ENCODE measurements at regions of chr19 and their contacts with region 1.

Region 1: DNA sequence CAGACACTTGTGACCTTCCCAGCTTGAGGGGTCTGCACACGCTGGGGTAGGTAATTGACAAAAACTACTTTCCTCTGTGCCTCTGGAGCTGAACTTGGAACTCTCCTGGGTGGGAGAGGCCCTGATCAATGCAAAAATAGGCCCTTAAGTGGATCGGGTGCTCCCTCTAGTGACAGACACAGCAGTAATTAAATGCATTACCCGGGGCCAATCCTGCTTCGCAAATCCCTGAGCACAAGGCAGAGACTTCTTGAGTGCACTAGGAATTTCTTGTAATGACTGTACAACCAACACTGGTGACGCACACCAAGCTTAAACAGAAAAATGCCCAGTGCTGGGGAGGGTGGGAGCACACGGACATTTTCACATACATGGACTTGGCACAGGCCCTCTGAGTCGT is 10.6 kb upstream of the UBE2S start:
- DNase-seq: peak in 1 of 2 donors; percentile 82
- ATAC-seq: peak; percentile 53 to 75 (median 59)
- H3K4me3 ChIP-seq: no peak overlapping the region
- H3K4me3 Mint-ChIP-seq: no peak overlapping the region
- H3K27ac ChIP-seq: no peak overlapping the region
- H3K27ac Mint-ChIP-seq: no peak overlapping the region
- H3K4me1 ChIP-seq: peaks cover 9% of the 10 kb centered on the region
- H3K4me1 Mint-ChIP-seq: peaks cover 5 to 6% of the 10 kb centered on the region in 2 donors
- H3K27me3 ChIP-seq: peaks cover 3% of the 10 kb centered on the region
- H3K27me3 Mint-ChIP-seq: peaks cover 1 to 6% of the 10 kb centered on the region in 2 donors
- CTCF ChIP-seq: peak; percentile 46

Region 2: DNA sequence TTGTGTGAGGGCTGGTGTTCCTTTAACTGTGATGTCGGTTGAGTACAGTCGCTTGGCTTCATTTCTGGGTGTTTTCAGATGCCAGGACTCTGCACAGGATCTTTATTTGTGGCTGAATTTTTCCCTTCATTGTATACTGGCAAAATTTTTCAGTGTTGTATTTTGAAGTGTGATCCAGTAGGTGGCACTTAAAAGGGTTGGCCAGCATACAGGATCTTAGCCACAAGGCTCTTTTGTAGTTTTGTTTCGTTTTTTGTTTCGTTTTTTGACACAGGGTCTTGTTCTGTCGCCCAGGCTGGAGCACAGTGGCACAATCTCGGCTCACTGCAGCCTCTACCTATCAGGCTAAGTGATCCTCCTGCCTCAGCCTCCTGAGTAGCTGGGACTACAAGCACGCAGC is 535.4 kb before region 1 on chr19:
- intact Hi-C with region 1: loop called (anchors 5 kb)
- DNase-seq: peak; percentile 21 to 50
- ATAC-seq: peak; percentile 86 to 89 (median 86)
- H3K4me3 ChIP-seq: no peak overlapping the region
- H3K4me3 Mint-ChIP-seq: peak overlapping the region; percentile 75
- H3K27ac ChIP-seq: peak overlapping the region; percentile 80
- H3K27ac Mint-ChIP-seq: peak overlapping the region; percentile 71 to 86
- H3K4me1 ChIP-seq: peaks cover 32% of the 10 kb centered on the region
- H3K4me1 Mint-ChIP-seq: peaks cover 17 to 18% of the 10 kb centered on the region in 2 donors
- H3K27me3 ChIP-seq: peaks cover 5% of the 10 kb centered on the region
- H3K27me3 Mint-ChIP-seq: peaks cover 4 to 9% of the 10 kb centered on the region in 2 donors
- CTCF ChIP-seq: peak; percentile 50

Region 3: DNA sequence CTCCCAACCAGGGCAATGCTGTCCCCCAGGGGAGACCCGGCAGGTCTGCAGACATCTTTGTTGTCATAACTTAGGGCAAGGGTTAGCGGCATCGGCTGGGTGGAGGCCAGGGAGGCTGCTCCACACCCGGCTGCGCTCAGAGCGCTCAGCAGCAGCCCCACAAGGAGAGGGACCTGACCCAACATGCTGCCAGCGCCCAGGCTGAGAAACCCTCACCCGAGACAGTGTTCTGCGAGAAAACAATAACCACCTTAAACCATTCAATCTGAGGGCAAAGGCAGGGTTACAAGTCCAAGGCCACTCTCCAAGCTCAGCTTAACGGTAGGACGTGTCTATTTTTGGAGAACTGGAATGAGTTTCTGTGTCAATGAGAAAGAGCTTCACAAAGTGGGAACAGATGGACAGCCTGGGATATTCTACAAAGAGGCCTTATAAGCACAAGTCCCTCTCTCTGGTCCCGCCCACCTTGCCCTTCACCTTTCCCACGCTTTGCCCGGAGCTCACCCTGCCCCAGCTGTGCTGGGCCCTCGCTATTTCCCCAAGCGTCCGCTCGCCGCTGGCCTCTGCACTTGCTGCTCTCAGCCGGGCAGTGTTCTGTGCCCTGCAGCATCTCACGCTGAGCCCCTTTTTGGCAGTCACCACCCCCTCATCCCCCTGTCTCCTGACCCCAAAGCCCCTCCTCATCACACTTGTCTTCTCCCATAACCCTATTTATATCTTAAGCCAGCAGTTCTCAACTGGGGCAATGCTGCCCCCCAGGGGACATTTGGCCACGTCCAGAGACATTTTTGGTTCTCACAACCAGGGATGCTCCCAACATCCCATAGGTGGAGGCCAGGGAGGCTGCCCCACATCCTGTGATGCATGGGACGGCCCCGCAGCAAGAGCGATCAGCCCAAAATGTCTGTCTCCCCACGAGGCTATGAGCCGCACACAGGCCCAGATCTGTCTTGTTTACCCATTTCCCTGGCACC is 318.4 kb before region 1 on chr19:
- intact Hi-C with region 1: no loop called
- DNase-seq: no peak
- ATAC-seq: no peak
- H3K4me3 ChIP-seq: no peak overlapping the region
- H3K4me3 Mint-ChIP-seq: no peak overlapping the region
- H3K27ac ChIP-seq: no peak overlapping the region
- H3K27ac Mint-ChIP-seq: no peak overlapping the region
- H3K4me1 ChIP-seq: no peaks in the 10 kb centered on the region
- H3K4me1 Mint-ChIP-seq: peaks cover 0 to 10% of the 10 kb centered on the region in 2 donors
- H3K27me3 ChIP-seq: no peaks in the 10 kb centered on the region
- H3K27me3 Mint-ChIP-seq: no peaks in the 10 kb centered on the region
- CTCF ChIP-seq: no peak

Region 4: DNA sequence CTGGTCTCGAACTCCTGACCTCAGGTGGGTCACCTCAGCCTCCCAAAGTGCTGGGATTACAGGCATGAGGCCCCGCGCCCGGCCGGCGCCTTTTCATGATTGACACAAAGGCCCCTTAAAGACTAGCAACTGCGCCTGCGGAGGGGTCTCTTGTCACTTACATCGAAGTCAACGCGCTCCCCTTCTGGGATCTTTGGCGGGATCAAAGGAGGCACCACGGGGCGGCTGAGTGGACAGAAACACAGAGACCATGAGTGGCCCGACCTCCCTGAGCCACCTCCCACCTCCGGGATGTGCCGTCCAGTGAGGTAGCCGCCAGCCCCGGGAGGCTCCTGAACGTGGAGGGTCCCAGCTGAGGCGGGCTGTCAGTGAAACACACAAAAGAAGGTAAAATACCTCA is 276.5 kb before region 1 on chr19:
- intact Hi-C with region 1: loop called (anchors 2 kb)
- DNase-seq: no peak
- ATAC-seq: no peak
- H3K4me3 ChIP-seq: no peak overlapping the region
- H3K4me3 Mint-ChIP-seq: no peak overlapping the region
- H3K27ac ChIP-seq: no peak overlapping the region
- H3K27ac Mint-ChIP-seq: no peak overlapping the region
- H3K4me1 ChIP-seq: peaks cover 21% of the 10 kb centered on the region
- H3K4me1 Mint-ChIP-seq: peaks cover 0 to 9% of the 10 kb centered on the region in 2 donors
- H3K27me3 ChIP-seq: peaks cover 35% of the 10 kb centered on the region
- H3K27me3 Mint-ChIP-seq: peaks cover 24 to 36% of the 10 kb centered on the region in 2 donors
- CTCF ChIP-seq: no peak

Region 5: GRCh38 chr19:55212447-55212846 is 205.7 kb before region 1 on chr19:
- intact Hi-C with region 1: loop called (anchors 1 kb)
- DNase-seq: peak; percentile 26 to 54
- ATAC-seq: peak; percentile 47 to 70 (median 65)
- H3K4me3 ChIP-seq: no peak overlapping the region
- H3K4me3 Mint-ChIP-seq: no peak overlapping the region
- H3K27ac ChIP-seq: no peak overlapping the region
- H3K27ac Mint-ChIP-seq: no peak overlapping the region
- H3K4me1 ChIP-seq: peaks cover 12% of the 10 kb centered on the region
- H3K4me1 Mint-ChIP-seq: peaks cover 16 to 19% of the 10 kb centered on the region in 2 donors
- H3K27me3 ChIP-seq: no peaks in the 10 kb centered on the region
- H3K27me3 Mint-ChIP-seq: peaks cover 7 to 12% of the 10 kb centered on the region in 2 donors
- CTCF ChIP-seq: no peak

Region 6: GRCh38 chr19:55289117-55289796 is 128.9 kb before region 1 on chr19:
- intact Hi-C with region 1: loop called (anchors 2 kb)
- DNase-seq: no peak
- ATAC-seq: no peak
- H3K4me3 ChIP-seq: no peak overlapping the region
- H3K4me3 Mint-ChIP-seq: no peak overlapping the region
- H3K27ac ChIP-seq: no peak overlapping the region
- H3K27ac Mint-ChIP-seq: no peak overlapping the region
- H3K4me1 ChIP-seq: peaks cover 5% of the 10 kb centered on the region
- H3K4me1 Mint-ChIP-seq: peaks cover 5 to 6% of the 10 kb centered on the region in 2 donors
- H3K27me3 ChIP-seq: no peaks in the 10 kb centered on the region
- H3K27me3 Mint-ChIP-seq: no peaks in the 10 kb centered on the region
- CTCF ChIP-seq: no peak

Region 7: GRCh38 chr19:55301459-55302317 is 116.5 kb before region 1 on chr19:
- intact Hi-C with region 1: loop called (anchors 1 kb)
- DNase-seq: peak; percentile 96
- ATAC-seq: peak; percentile 93 to 95 (median 94)
- H3K4me3 ChIP-seq: peak overlapping the region; percentile 35
- H3K4me3 Mint-ChIP-seq: peak overlapping the region; percentile 84
- H3K27ac ChIP-seq: peak overlapping the region; percentile 46
- H3K27ac Mint-ChIP-seq: peak overlapping the region; percentile 75 to 92
- H3K4me1 ChIP-seq: peaks cover 15% of the 10 kb centered on the region
- H3K4me1 Mint-ChIP-seq: peaks cover 0 to 13% of the 10 kb centered on the region in 2 donors
- H3K27me3 ChIP-seq: no peaks in the 10 kb centered on the region
- H3K27me3 Mint-ChIP-seq: no peaks in the 10 kb centered on the region
- CTCF ChIP-seq: peak; percentile 90

Measured in natural killer cell (primary cell).